ENCODE measurements at regions of chr19 and their contacts with region 1.

Region 1: DNA sequence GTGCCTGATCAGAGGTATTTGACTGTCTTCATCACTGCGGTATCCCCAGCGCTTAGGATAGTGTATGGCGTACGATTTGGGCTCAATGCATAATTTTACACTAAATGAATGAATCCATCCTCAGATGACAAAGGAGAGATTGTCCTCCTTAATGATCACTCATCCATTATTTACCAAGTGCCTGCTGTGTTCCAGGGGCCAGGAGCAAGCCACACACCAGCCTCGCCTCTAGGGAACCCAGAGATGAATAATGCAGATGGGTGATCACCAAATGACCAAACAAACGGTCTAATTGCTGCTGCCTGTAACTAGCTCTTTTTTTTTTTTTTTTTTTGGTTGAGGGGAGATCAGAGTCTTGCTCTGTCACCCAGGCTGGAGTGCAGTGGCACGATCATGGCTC is 5.9 kb upstream of the GPR32 start:
- DNase-seq: no peak
- H3K4me3 ChIP-seq: no peak overlapping the region
- H3K27ac ChIP-seq: no peak overlapping the region
- H3K4me1 ChIP-seq: no peaks in the 10 kb centered on the region
- H3K27me3 ChIP-seq: no peaks in the 10 kb centered on the region
- CTCF ChIP-seq: no peak
- POLR2A ChIP-seq: no peak

Region 2: GRCh38 chr19:50753879-50754278 is 10.5 kb before region 1 on chr19:
- CTCF ChIA-PET with region 1: interaction called, 28 read pairs
- POLR2A ChIA-PET with region 1: no interaction called
- dilution Hi-C with region 1: no loop called
- intact Hi-C with region 1: no loop called
- DNase-seq: no peak
- H3K4me3 ChIP-seq: no peak overlapping the region
- H3K27ac ChIP-seq: no peak overlapping the region
- H3K4me1 ChIP-seq: no peaks in the 10 kb centered on the region
- H3K27me3 ChIP-seq: peaks cover 0 to 1% of the 10 kb centered on the region in 2 experiments
- CTCF ChIP-seq: no peak
- POLR2A ChIP-seq: no peak

Measured in endothelial cell of umbilical vein (primary cell).